ENCODE measurements at regions of chr2 and their contacts with region 1.

Region 1: GRCh38 chr2:241702132-241703031 is 543 bp downstream of the ING5 start:
- DNase-seq: peak; percentile 93
- ATAC-seq: peak; percentile 73
- H3K4me3 Mint-ChIP-seq: peak overlapping the region; percentile 82
- H3K27ac Mint-ChIP-seq: peak overlapping the region; percentile 79
- H3K4me1 Mint-ChIP-seq: peaks cover 26% of the 10 kb centered on the region
- H3K27me3 Mint-ChIP-seq: no peaks in the 10 kb centered on the region
- CTCF ChIP-seq: no peak

Region 2: DNA sequence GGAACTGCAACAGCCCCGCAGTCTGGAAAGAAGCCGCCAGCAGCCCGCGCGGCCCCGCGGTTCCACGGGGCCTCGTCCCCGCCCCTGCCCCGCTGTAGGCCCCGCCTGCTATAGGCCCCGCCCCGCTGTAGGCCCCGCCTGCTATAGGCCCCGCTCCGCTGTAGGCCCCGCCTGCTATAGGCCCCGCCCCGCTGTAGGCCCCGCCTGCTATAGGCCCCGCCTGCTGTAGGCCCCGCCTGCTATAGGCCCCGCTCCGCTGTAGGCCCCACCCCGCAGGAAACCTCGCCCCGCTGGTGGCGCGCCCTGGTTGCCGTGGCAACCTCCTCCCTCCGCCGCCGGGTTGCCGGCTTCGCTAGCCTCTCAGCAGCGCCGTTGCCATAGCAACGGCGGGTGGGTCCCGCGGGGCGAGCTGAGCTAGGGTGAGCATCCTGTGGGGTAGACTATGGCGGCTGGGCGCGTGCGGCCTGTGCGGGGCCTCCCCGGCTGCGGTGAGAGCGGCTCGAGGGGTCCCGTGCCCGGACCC is 870.1 kb before region 1 on chr2:
- CTCF ChIA-PET with region 1: no interaction called
- POLR2A ChIA-PET with region 1: no interaction called
- intact Hi-C with region 1: loop called (anchors 1 kb)
- DNase-seq: peak; percentile 89
- ATAC-seq: peak; percentile 94
- H3K4me3 Mint-ChIP-seq: peak overlapping the region; percentile 55
- H3K27ac Mint-ChIP-seq: no peak overlapping the region
- H3K4me1 Mint-ChIP-seq: peaks cover 5% of the 10 kb centered on the region
- H3K27me3 Mint-ChIP-seq: peaks cover 18% of the 10 kb centered on the region
- CTCF ChIP-seq: no peak

Region 3: DNA sequence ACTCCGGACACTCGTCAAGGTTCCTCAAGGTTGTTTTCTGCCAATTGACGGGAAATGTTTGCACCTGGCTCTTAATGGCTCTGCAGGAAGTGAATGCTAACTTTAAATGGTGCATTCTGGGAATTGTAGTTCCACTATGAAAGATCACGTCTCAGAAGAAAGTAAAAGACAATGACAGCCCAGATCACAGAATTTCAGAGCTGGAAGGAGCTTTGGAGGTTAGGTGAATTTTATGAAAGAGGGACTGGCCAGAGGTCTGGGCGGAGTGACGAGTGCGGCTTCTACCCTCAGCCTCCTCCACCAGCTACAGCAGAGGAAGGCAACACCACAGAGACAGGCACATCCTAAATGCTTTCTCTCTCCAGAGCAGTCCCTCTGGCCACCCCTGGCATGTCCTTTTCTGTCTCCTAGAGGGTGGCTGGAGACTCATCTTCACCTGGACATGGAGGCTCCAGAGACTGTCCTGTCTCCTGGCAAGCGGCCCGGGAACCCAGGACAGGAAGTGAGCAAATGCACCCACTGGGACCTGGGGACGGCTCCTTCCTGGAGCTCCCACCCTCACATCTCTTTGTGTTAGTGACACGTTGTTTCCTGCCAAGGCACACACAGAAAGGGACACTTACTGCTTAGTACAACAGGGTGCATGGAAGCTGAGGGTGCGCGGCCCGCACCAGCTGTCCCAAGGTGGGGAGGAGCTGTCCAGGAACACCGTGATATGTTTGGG is 84.8 kb before region 1 on chr2:
- CTCF ChIA-PET with region 1: no interaction called
- POLR2A ChIA-PET with region 1: interaction called, 3 read pairs
- intact Hi-C with region 1: loop called (anchors 5 kb)
- DNase-seq: peak; percentile 20
- ATAC-seq: peak; percentile 83
- H3K4me3 Mint-ChIP-seq: peak overlapping the region; percentile 92
- H3K27ac Mint-ChIP-seq: peak overlapping the region; percentile 86
- H3K4me1 Mint-ChIP-seq: peaks cover 24% of the 10 kb centered on the region
- H3K27me3 Mint-ChIP-seq: no peaks in the 10 kb centered on the region
- CTCF ChIP-seq: no peak

Region 4: DNA sequence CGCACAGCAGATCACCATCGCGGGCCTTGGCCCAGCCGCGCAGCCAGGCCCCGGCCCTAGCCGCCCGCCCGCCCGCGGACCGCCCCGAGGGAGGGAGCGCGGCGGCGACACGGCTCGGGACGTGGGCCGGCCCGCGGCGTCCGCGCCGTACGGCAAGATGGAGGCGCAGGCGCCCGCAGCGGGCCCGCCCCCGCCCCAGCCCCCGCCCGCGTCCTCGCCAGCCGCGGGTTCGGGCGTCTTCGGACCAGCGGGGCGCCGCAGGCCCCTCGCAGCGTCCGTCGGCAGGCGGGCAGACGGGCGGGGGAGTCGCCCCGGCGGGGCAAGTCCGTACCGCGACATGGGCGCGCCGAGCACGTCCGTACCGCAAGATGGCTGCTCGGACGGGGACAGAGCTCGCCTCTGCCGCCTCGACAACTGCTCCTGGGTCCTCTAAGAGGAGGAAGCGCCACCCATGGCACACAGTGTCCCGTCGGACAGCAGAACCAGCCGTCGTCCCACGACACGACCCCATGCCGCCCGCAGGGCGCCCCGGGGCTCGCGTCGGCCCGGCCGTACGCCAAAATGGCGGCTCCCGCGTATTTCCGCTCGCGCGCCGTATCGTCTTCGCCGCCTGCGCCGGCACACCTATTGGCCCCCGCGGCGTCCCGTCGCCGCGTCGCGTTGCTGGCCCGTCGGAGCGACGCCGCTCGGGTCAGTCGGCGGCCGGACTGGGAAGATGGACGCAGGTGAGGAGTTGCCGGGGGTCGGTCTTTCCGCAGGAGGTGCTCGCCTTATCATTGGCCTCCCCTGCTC is 65.2 kb before region 1 on chr2 and contains the starts of genes ATG4B and THAP4:
- CTCF ChIA-PET with region 1: no interaction called
- POLR2A ChIA-PET with region 1: interaction called, 16 read pairs
- intact Hi-C with region 1: loop called (anchors 1 kb)
- DNase-seq: peak; percentile 84
- ATAC-seq: peak; percentile 72
- H3K4me3 Mint-ChIP-seq: peak within 1 kb of the TSS; percentile 91
- H3K27ac Mint-ChIP-seq: peak within 1 kb of the TSS; percentile 83
- H3K4me1 Mint-ChIP-seq: peaks cover 45% of the 10 kb centered on the region
- H3K27me3 Mint-ChIP-seq: no peaks in the 10 kb centered on the region
- CTCF ChIP-seq: no peak
- total RNA-seq, gene ATG4B: 92.6 and 101 TPM in 2 replicates
- total RNA-seq, gene THAP4: 23.7 and 26.7 TPM in 2 replicates

Region 5: DNA sequence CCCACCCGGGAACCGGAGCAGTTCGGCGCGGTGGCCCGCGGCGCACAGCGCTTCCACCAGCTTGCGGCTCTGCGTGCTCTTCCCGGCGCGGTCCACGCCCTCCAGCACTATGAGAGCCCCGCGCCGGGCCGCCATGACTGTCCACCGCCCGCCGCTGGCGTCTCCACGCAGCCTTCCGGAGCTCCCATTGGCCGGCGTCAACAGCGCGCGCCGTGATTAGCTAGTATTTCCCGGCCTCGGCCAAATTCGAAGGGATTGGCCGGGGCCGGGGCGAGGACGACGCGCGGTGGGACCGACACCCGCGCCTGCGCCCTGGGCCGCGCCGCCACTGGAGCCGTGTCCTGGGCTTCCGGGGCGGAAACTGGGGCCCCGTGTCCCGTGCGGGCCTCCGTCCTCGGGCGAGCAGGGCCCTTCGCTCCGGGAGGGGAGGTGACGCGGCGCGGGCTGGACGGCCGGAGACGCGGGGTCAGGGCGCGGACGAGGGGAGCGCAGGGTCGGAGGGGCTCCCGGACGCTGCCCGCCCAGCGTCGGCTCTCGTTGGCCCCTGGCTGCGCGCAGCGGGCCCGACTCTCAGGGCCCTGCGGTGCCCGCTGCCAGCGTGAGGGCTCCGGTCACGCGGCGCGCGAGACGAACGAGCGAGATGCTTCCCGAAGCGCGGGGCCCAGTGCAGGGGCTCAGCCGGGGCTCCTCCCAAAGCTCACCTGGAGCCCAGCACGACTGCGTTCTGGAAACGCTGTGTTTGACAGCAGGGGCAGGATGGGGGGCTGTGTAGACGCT is 15.5 kb before region 1 on chr2 and contains the start of gene DTYMK:
- CTCF ChIA-PET with region 1: interaction called, 12 read pairs
- POLR2A ChIA-PET with region 1: interaction called, 117 read pairs
- intact Hi-C with region 1: loop called (anchors 1 kb)
- DNase-seq: peak; percentile 99
- ATAC-seq: peak; percentile 95
- H3K4me3 Mint-ChIP-seq: peak within 1 kb of the TSS; percentile 80
- H3K27ac Mint-ChIP-seq: peak within 1 kb of the TSS; percentile 87
- H3K4me1 Mint-ChIP-seq: peaks cover 28% of the 10 kb centered on the region
- H3K27me3 Mint-ChIP-seq: no peaks in the 10 kb centered on the region
- CTCF ChIP-seq: no peak
- total RNA-seq, gene DTYMK: 29.2 and 34.7 TPM in 2 replicates

Region 6: GRCh38 chr2:241788572-241788971 is 86.2 kb after region 1 on chr2:
- CTCF ChIA-PET with region 1: no interaction called
- POLR2A ChIA-PET with region 1: interaction called, 4 read pairs
- intact Hi-C with region 1: loop called (anchors 1 kb)
- DNase-seq: peak; percentile 23
- ATAC-seq: peak; percentile 87
- H3K4me3 Mint-ChIP-seq: peak overlapping the region; percentile 45
- H3K27ac Mint-ChIP-seq: peak overlapping the region; percentile 79
- H3K4me1 Mint-ChIP-seq: peaks cover 35% of the 10 kb centered on the region
- H3K27me3 Mint-ChIP-seq: no peaks in the 10 kb centered on the region
- CTCF ChIP-seq: no peak

Region 7: GRCh38 chr2:241844066-241844728 is 141.8 kb after region 1 on chr2:
- CTCF ChIA-PET with region 1: no interaction called
- POLR2A ChIA-PET with region 1: interaction called, 15 read pairs
- intact Hi-C with region 1: no loop called
- DNase-seq: peak; percentile 79
- ATAC-seq: peak; percentile 91
- H3K4me3 Mint-ChIP-seq: peak overlapping the region; percentile 80
- H3K27ac Mint-ChIP-seq: peak overlapping the region; percentile 66
- H3K4me1 Mint-ChIP-seq: peaks cover 30% of the 10 kb centered on the region
- H3K27me3 Mint-ChIP-seq: no peaks in the 10 kb centered on the region
- CTCF ChIP-seq: no peak

Measured in activated B cell treated with CpG ODN at 0.5 μM for 24 hours (primary cell).